ENCODE measurements at regions of chr22 and their contacts with region 1.

Region 1: GRCh38 chr22:29394931-29395581 is 6.7 kb upstream of the AP1B1 start:
- DNase-seq: peak; percentile 81
- H3K4me3 Mint-ChIP-seq: no peak overlapping the region
- H3K27ac Mint-ChIP-seq: no peak overlapping the region
- H3K4me1 Mint-ChIP-seq: peaks cover 6% of the 10 kb centered on the region
- H3K27me3 Mint-ChIP-seq: no peaks in the 10 kb centered on the region

Region 2: DNA sequence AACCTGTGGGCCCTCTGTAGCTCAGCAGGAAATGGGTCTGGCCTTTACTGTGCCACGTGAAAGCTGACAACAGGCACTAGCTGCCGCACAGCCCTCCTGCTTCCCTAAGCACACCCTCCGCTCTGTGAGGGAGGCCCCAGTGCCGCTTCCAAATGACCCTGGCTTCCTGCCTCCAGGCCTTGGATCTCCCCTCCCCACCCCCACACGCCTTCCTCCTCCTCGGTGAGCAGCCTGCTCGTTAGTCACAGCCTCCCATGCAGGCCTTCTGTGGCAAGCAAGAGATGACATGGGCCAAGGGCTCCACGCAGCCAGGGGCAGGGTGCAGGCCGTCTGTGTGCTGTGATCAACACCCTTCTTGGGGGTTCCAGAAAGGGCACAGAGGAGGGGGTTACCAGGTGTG is 64.3 kb before region 1 on chr22:
- CTCF ChIA-PET with region 1: no interaction called
- intact Hi-C with region 1: no loop called
- DNase-seq: no peak
- H3K4me3 Mint-ChIP-seq: no peak overlapping the region
- H3K27ac Mint-ChIP-seq: no peak overlapping the region
- H3K4me1 Mint-ChIP-seq: no peaks in the 10 kb centered on the region
- H3K27me3 Mint-ChIP-seq: no peaks in the 10 kb centered on the region

Region 3: DNA sequence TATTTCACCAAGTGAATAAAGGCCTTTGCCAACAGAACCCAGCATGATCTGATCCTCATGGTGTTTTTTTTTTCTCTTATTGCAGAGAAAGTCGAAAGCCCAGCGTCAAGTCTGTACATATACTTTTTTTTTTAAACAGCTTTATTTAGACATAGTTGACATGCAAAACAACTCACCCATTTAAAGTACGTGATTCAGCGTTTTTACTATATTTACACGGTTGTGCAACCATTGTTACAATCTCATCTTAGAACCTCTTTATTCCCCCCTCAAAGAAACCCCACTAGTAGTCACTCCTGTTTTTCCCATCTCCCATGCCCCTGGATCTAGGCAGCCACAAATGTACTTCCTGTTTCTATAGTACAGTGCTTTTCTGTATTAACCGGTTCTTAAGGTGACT is 13.9 kb after region 1 on chr22:
- CTCF ChIA-PET with region 1: interaction called, 9 read pairs
- intact Hi-C with region 1: loop called (anchors 1 kb)
- DNase-seq: no peak
- H3K4me3 Mint-ChIP-seq: no peak overlapping the region
- H3K27ac Mint-ChIP-seq: no peak overlapping the region
- H3K4me1 Mint-ChIP-seq: peaks cover under 1% of the 10 kb centered on the region
- H3K27me3 Mint-ChIP-seq: no peaks in the 10 kb centered on the region

Region 4: GRCh38 chr22:29470159-29470855 is 75.3 kb after region 1 on chr22:
- CTCF ChIA-PET with region 1: interaction called, 3 read pairs
- intact Hi-C with region 1: loop called (anchors 1 kb)
- DNase-seq: peak; percentile 80
- H3K4me3 Mint-ChIP-seq: peak overlapping the region; percentile 32
- H3K27ac Mint-ChIP-seq: no peak overlapping the region
- H3K4me1 Mint-ChIP-seq: no peaks in the 10 kb centered on the region
- H3K27me3 Mint-ChIP-seq: peaks cover 9% of the 10 kb centered on the region

Region 5: DNA sequence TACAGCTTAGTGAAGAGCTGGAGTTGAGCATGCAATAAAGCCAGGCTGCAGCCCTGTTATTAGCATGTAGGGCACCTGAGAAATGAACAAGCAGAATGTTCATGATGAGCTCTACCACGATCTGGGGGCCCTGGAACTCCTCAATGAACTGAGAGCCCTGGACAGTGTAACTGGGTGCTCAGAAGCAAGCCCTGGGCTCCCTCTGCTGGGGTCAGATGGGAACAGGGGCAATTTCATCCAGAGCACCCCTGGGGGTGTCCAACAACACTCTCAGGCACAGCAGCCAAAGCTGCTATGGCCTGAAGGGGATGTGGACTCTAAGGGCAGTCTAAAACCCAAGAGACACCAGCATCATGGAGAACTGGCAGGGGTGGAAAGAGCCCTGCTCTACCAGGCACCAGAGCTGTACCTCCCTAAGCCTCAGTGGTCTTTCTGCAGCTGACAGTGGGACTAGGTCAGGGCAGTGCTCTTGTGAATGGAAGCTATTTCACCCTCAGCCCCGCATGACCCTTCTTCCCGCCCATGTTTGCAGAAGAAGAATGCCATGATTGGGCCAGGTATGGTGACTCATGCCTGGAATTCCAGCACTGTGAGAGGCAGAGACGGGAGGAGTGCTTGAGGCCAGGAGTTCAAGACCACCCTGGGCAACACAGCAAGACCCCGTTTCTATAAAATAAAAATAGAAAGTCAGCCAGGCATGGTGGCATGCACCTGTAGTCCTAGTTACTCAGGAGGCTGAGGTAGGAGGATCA is 129.6 kb after region 1 on chr22:
- CTCF ChIA-PET with region 1: interaction called, 5 read pairs
- intact Hi-C with region 1: loop called (anchors 1 kb)
- DNase-seq: peak; percentile 40
- H3K4me3 Mint-ChIP-seq: no peak overlapping the region
- H3K27ac Mint-ChIP-seq: no peak overlapping the region
- H3K4me1 Mint-ChIP-seq: no peaks in the 10 kb centered on the region
- H3K27me3 Mint-ChIP-seq: no peaks in the 10 kb centered on the region

Measured in activated naive CD4-positive, alpha-beta T cell treated with anti-CD3 and anti-CD28 coated beads for 36 hours (primary cell).